Cardiac septum (tissue), 1 donor: ENCODE measurements at regions of chr12 and their contacts with region 1.

Region 1: DNA sequence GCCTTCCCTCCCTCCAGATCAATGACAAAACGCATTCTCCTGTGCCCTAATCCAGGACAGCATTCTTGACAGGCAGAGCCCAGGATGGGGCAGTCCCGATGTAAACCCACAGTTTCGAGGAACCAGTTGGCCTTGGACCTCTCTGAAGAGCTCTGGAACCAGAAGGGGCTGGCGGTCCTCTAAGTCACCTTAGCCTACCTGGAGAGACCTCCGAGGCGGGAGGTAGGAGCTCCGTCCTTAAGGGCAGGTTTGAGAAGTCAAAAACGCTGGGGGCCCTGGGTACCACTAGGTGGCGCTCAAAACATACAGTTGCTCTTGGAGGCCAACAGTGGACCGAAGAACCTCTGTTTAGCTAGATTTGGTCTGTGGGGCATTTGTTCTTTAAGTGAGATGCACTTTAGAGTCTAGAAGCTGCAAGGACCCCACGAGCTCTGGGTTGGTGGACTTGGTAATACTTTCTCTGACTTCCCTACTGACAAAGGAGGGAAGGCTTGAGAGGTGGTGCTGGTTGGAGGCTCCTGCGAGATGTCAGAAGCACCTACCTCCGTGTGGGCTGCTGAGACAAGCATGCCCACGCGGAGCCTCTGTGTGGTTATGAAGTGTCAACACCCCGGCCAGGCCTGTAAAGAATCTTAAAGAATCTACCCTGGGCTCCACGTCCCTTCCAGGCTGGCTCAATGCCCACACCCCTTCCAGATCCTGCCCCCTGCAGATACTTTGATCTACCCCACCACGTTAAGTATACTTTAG is 74.8 kb upstream of the CHST11 start:
- DNase-seq: peak; percentile 86

Region 2: DNA sequence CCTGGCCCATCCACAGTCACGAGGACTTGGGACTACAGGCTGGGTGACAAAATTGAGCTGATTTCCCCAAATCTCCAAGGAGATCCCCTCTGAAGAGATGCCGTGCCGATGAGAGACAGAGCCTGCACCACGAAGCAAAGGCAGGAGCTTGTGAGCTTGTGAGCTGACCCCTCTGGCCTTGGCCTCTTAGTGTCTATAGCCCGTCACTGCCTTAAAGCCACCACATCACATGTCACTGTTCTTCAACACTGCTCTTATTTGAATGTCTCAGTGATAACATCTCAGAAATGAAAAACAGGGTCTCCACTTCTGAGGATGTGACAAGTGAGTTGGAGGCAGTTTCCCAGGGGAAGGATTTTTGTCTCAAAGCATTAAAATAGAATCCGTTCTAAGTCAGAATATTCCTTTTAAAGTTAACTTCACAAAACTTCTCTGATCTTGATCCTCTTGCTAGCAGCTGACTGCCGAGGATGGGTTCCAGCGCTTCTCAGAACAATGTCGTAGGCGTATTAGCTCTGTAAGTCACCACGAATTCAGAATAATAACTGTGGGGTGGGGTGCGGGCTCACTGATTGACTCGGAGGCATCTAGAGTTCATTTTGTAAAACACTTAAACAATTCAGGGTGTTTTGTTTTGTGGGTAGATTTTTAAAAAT is 112.4 kb after region 1 on chr12:
- intact Hi-C with region 1: no loop called
- DNase-seq: no peak

Region 3: GRCh38 chr12:104877123-104877705 is 495.3 kb after region 1 on chr12:
- intact Hi-C with region 1: loop called (anchors 2 kb)
- DNase-seq: no peak

Region 4: GRCh38 chr12:105053116-105053572 is 671.2 kb after region 1 on chr12:
- intact Hi-C with region 1: loop called (anchors 5 kb)
- DNase-seq: no peak